A549 (cell line): ENCODE measurements at regions of chr15 and their contacts with region 1.

Region 1: DNA sequence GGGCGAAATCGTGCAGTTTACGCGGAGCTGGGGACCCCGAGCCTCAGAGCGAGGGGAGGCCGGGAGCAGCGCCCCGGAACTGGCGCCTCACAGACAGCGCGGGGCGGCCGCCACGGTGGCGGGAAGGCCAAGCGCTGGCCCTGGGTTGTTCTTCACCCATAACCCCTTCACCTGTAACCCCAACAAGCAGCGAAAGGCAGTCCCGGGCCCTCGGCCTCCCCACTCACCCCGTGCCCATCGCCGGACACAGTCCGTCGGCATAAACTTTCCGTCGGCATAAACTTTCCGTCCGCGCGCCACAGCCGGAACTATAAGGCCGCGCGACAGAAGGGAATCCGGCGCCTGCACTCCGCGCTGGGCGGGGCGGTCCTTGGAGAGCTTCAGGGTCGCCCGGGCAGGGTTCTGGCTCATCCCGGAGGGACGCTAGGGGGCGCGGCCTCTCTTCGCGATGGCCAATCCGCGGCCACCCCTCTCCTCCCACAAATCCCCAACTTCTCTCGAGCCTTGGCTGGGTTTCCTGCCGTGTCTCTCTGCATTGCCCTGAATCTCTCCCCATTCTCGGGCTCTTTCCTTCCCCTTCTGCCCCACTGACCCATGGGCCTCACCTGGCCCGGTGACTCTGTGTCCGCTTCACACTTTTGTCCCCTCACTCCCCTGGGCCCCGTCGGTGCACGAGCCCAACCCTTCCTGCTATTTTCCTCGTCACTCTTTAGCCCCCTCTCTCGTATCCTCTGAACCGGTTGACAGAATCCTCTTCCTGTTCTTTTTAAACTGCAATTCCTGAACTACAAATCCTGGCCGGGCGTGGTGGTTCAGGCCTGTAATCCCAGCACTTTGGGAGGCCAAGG is at the start of gene INTS14:
- DNase-seq: peak; percentile 97 to 99
- ATAC-seq: peak; percentile 97 to 99
- H3K4me3 ChIP-seq: peak within 1 kb of the TSS; percentile 83
- H3K27ac ChIP-seq: peak within 1 kb of the TSS; percentile 93 to 94
- H3K4me1 ChIP-seq: peaks cover 18% of the 10 kb centered on the region
- CTCF ChIP-seq: peak; percentile 81
- EP300 ChIP-seq: no peak
- POLR2A ChIP-seq: peak; percentile 86
- RAD21 ChIP-seq: peak; percentile 59 to 82
- polyA plus RNA-seq, gene INTS14: 81.4 and 82.1 TPM in 2 replicates

Region 2: DNA sequence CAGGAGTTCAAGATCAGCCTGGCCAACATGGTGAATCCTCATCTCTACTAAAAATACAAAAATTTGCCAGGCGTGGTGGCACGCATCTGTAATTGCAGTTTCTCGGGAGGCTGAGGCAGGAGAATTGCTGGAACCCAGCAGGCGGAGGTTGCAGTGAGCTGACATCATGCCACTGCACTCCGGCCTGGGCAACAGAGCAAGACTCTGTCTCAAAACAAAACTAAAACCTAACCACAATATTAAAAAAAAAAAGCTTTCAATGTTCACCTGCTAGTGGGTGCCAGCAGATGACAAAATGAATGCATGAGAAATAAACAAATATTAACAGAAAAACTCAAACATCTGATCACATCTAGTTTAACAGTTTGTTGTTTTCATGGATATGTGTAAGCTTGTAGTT is 19.7 kb after region 1 on chr15:
- CTCF ChIA-PET with region 1: interaction called, 16 read pairs
- POLR2A ChIA-PET with region 1: interaction called, 3 read pairs
- DNase-seq: no peak
- ATAC-seq: no peak
- H3K4me3 ChIP-seq: no peak overlapping the region
- H3K27ac ChIP-seq: no peak overlapping the region
- H3K4me1 ChIP-seq: peaks cover 12% of the 10 kb centered on the region
- CTCF ChIP-seq: no peak
- EP300 ChIP-seq: no peak
- POLR2A ChIP-seq: no peak
- RAD21 ChIP-seq: no peak